ENCODE measurements at regions of chr6 and their contacts with region 1.

Region 1: GRCh38 chr6:15793288-15793687 is 130.5 kb upstream of the DTNBP1 start:
- DNase-seq: peak; percentile 67 to 75
- ATAC-seq: peak; percentile 94 to 96
- H3K4me3 ChIP-seq: no peak overlapping the region
- H3K27ac ChIP-seq: peak overlapping the region; percentile 65 to 83 (median 78)
- H3K4me1 ChIP-seq: peaks cover 57 to 61% of the 10 kb centered on the region in 2 donors
- H3K27me3 ChIP-seq: no peaks in the 10 kb centered on the region
- CTCF ChIP-seq: no peak
- POLR2A ChIP-seq: no peak

Region 2: GRCh38 chr6:15715060-15715459 is 78.2 kb before region 1 on chr6:
- in situ Hi-C with region 1: no loop called
- intact Hi-C with region 1: loop called (anchors 2 kb)
- DNase-seq: peak; percentile 6 to 40
- ATAC-seq: peak; percentile 70 to 79
- H3K4me3 ChIP-seq: no peak overlapping the region
- H3K27ac ChIP-seq: peak overlapping the region; percentile 44 to 80 (median 64)
- H3K4me1 ChIP-seq: peaks cover 29 to 30% of the 10 kb centered on the region in 2 donors
- H3K27me3 ChIP-seq: no peaks in the 10 kb centered on the region
- CTCF ChIP-seq: no peak
- POLR2A ChIP-seq: no peak

Region 3: GRCh38 chr6:15885624-15886023 is 92.3 kb after region 1 on chr6:
- in situ Hi-C with region 1: no loop called
- intact Hi-C with region 1: loop called (anchors 2 kb)
- DNase-seq: no peak
- ATAC-seq: peak; percentile 63 to 82
- H3K4me3 ChIP-seq: no peak overlapping the region
- H3K27ac ChIP-seq: peak overlapping the region in 3 of 4 donors; percentile 54 to 69 (median 60)
- H3K4me1 ChIP-seq: peaks cover 4 to 22% of the 10 kb centered on the region in 2 donors
- H3K27me3 ChIP-seq: no peaks in the 10 kb centered on the region
- CTCF ChIP-seq: no peak
- POLR2A ChIP-seq: no peak

Region 4: GRCh38 chr6:16108921-16109658 is 315.8 kb after region 1 on chr6:
- in situ Hi-C with region 1: no loop called
- intact Hi-C with region 1: loop called (anchors 5 kb)
- DNase-seq: no peak
- ATAC-seq: peak; percentile 18 to 47
- H3K4me3 ChIP-seq: no peak overlapping the region
- H3K27ac ChIP-seq: peak overlapping the region; percentile 71 to 85 (median 82)
- H3K4me1 ChIP-seq: peaks cover 56% of the 10 kb centered on the region in 2 donors
- H3K27me3 ChIP-seq: no peaks in the 10 kb centered on the region
- CTCF ChIP-seq: no peak
- POLR2A ChIP-seq: no peak

Region 5: GRCh38 chr6:17574866-17575560 is 1781.7 kb after region 1 on chr6:
- in situ Hi-C with region 1: no loop called
- intact Hi-C with region 1: no loop called
- DNase-seq: no peak
- ATAC-seq: peak; percentile 82 to 86
- H3K4me3 ChIP-seq: no peak overlapping the region
- H3K27ac ChIP-seq: no peak overlapping the region
- H3K4me1 ChIP-seq: no peaks in the 10 kb centered on the region
- H3K27me3 ChIP-seq: no peaks in the 10 kb centered on the region
- CTCF ChIP-seq: no peak
- POLR2A ChIP-seq: no peak